Activated naive CD4-positive, alpha-beta T cell treated with anti-CD3 and anti-CD28 coated beads for 36 hours (primary cell): ENCODE measurements at regions of chr6 and their contacts with region 1.

Region 1: DNA sequence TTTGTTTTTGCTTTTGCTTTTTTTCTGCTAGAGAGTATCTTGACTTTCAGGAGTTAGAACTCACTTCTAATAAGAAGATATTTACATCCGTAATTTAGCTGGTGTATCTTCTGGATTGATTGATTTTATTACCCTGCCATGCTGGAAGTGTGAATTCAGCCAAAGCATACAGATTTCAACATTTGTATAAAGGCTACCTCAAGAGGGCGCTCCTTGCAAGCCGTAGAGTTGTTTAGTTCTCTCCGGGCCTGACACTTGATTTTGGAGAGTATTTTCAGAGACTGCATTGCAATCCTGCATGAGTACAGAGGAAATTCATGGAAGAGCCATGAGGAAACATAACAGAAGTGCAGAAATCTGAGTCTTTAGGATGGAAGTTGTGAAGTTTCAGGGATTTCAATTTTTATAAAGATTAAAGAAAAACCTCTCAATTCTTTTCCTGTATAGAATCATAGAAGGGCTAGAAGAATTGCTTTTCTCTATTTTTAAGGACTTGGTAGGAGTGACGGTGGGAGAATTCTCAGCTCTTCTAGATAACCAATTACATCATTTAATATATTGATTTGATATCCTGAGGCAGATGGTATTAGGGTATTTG is 66.7 kb upstream of the TIAM2 start:
- DNase-seq: peak; percentile 88
- H3K4me3 Mint-ChIP-seq: no peak overlapping the region
- H3K27ac Mint-ChIP-seq: no peak overlapping the region
- H3K4me1 Mint-ChIP-seq: peaks cover 3% of the 10 kb centered on the region
- H3K27me3 Mint-ChIP-seq: no peaks in the 10 kb centered on the region

Region 2: DNA sequence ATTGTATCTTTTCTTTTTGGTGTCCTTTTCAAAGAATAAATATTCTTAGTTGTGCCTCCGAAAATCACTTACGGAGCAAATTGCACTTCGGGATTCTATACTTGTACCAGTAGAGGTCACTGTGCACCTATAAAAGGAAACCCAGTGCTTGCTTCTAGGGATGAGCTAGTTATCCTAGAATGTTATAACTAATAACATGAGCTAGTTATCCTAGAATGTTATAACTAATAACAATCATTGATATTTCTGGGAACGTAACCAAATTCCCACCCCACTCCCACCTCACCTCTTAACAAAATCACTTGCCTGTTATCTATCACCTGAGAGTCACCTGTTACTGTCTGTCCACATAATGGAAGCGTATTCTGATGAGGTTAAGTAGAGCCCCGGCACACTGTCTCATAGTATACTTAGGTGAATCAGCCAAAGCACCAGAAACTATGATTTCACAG is 60.3 kb before region 1 on chr6:
- CTCF ChIA-PET with region 1: interaction called, 3 read pairs
- intact Hi-C with region 1: loop called (anchors 1 kb)
- DNase-seq: no peak
- H3K4me3 Mint-ChIP-seq: no peak overlapping the region
- H3K27ac Mint-ChIP-seq: no peak overlapping the region
- H3K4me1 Mint-ChIP-seq: peaks cover 18% of the 10 kb centered on the region
- H3K27me3 Mint-ChIP-seq: no peaks in the 10 kb centered on the region

Region 3: GRCh38 chr6:155041741-155042279 is 113.4 kb after region 1 on chr6:
- CTCF ChIA-PET with region 1: no interaction called
- intact Hi-C with region 1: no loop called
- DNase-seq: no peak
- H3K4me3 Mint-ChIP-seq: no peak overlapping the region
- H3K27ac Mint-ChIP-seq: no peak overlapping the region
- H3K4me1 Mint-ChIP-seq: no peaks in the 10 kb centered on the region
- H3K27me3 Mint-ChIP-seq: peaks cover 5% of the 10 kb centered on the region

Region 4: DNA sequence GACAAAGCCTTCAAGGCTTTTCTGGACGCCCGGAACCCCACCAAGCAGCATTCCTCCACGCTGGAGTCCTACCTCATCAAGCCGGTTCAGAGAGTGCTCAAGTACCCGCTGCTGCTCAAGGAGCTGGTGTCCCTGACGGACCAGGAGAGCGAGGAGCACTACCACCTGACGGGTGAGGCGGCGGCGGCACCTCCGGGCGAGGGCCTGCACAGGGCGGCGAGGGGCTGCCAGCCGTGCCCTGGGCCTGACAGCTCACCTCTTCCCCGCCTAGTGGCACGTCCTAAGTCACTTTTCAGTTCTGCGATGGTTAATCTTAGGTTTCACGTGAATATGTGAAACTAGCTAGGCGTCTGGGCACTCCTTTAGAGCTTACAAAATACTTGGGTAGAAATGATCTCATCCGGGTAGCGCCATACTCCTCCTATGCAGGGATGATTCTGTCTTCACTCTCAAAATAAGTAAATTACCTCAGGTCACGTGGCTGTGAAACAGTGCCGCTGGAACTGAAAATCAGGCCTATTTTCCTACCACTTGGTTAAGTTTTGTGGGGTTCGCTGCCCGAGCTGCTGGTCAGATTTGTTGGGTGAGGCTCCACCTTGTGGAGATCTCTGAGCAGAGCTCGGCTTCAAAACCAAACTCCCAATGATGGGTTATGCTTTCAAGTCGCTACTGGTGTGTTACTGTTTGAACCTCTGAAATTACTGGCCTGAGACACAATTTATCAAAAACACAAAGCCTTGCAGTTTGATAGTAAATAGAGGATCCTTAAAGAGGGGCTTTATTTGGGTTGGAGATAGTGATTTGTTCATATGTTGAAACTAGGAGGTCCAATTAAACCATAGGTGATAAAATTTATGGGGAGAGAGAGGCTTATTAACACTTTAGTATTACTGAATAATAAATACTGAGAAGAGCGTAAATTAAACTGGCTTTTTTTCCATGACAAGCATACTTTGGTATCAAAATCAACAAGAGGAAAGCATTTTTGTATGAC is 319.9 kb after region 1 on chr6:
- CTCF ChIA-PET with region 1: interaction called, 4 read pairs
- intact Hi-C with region 1: loop called (anchors 1 kb)
- DNase-seq: peak; percentile 46
- H3K4me3 Mint-ChIP-seq: no peak overlapping the region
- H3K27ac Mint-ChIP-seq: no peak overlapping the region
- H3K4me1 Mint-ChIP-seq: no peaks in the 10 kb centered on the region
- H3K27me3 Mint-ChIP-seq: no peaks in the 10 kb centered on the region